ENCODE measurements at regions of chr3 and their contacts with region 1.

Region 1: DNA sequence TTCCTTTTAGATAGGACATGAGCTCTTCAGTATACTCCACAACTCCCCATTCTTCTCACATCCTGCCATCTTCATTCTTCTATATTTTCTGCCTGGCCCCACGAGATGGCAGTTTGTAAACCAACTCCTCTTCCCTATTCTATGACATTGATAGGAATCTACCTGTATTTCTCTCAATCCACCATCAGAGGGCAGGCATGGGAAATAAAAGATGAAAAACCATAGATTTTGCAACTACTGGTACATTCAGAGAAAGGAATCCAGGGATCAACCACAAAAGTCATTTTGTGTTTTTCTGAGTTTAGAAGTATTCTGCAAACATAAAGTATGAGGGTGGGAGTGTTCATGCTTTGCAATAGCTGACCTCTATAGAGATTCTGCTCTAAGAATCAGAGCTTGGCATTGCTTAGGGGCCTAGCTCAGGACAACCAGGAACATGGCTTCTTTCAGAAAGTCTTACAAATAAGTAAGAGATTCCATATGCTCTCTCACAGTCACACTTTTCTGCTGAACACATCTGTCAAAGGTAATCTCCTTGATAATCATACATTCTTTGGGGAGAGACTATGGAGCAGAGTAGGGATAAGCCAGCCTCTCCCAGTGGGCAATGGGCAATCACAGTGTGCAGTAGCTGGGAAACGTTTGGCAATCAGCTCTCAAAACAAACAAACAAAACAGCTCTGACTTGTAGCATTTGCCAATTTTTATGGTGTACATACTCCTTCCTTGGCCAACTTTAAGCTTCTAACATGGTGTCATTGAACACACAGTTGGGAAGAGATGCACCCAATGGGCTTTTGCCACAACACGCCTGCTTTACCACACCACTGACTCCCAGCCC is 43.1 kb upstream of the SLC25A36 start:
- DNase-seq: no peak
- H3K4me3 ChIP-seq: no peak overlapping the region
- H3K27ac ChIP-seq: no peak overlapping the region
- H3K4me1 ChIP-seq: no peaks in the 10 kb centered on the region
- H3K27me3 ChIP-seq: no peaks in the 10 kb centered on the region
- CTCF ChIP-seq: peak in 2 of 3 experiments; percentile 47 to 58; a peak in 2 of 4 replicates
- EP300 ChIP-seq: no peak
- POLR2A ChIP-seq: no peak
- RAD21 ChIP-seq: peak; percentile 53 to 56

Region 2: DNA sequence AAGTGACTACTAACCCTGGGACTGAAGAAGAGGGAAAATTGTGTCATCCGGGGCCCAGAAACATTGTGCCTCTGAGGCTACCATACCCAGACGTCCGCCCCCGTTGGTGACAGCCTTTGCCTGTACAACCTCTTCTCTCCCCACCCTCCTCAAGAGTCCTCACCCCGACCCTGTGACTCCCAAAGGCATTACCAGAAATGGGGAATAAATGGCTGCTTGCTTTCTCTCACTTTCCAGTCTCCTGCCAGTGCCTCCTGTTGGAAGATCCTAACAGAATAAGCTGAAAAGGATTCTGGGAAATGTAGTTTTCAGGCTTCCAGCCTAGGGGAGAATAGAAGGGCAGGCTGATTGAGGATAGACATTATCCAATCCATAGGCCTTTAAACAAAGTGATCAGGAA is 12.3 kb after region 1 on chr3:
- CTCF ChIA-PET with region 1: interaction called, 18 read pairs
- POLR2A ChIA-PET with region 1: no interaction called
- DNase-seq: peak; percentile 9 to 66
- H3K4me3 ChIP-seq: peak overlapping the region; percentile 35 to 54 (median 42); a peak in 6 of 8 replicates
- H3K27ac ChIP-seq: no peak overlapping the region
- H3K4me1 ChIP-seq: no peaks in the 10 kb centered on the region; a peak in 2 of 7 replicates
- H3K27me3 ChIP-seq: no peaks in the 10 kb centered on the region; a peak in 1 of 7 replicates
- CTCF ChIP-seq: peak in 2 of 3 experiments; percentile 21 to 43; a peak in 2 of 4 replicates
- EP300 ChIP-seq: no peak
- POLR2A ChIP-seq: no peak
- RAD21 ChIP-seq: no peak

Region 3: GRCh38 chr3:140922634-140923033 is 24.1 kb after region 1 on chr3:
- CTCF ChIA-PET with region 1: interaction called, 19 read pairs
- POLR2A ChIA-PET with region 1: no interaction called
- DNase-seq: no peak
- H3K4me3 ChIP-seq: no peak overlapping the region
- H3K27ac ChIP-seq: no peak overlapping the region
- H3K4me1 ChIP-seq: peaks cover 0 to under 1% (median 0%) of the 10 kb centered on the region in 4 experiments; a peak in 1 of 7 replicates
- H3K27me3 ChIP-seq: no peaks in the 10 kb centered on the region
- CTCF ChIP-seq: peak in 1 of 3 experiments; percentile 44; a peak in 2 of 4 replicates
- EP300 ChIP-seq: no peak
- POLR2A ChIP-seq: no peak
- RAD21 ChIP-seq: peak; percentile 55 to 57